Thyroid gland (tissue), 4 donors: ENCODE measurements at regions of chr13 and their contacts with region 1.

Region 1: DNA sequence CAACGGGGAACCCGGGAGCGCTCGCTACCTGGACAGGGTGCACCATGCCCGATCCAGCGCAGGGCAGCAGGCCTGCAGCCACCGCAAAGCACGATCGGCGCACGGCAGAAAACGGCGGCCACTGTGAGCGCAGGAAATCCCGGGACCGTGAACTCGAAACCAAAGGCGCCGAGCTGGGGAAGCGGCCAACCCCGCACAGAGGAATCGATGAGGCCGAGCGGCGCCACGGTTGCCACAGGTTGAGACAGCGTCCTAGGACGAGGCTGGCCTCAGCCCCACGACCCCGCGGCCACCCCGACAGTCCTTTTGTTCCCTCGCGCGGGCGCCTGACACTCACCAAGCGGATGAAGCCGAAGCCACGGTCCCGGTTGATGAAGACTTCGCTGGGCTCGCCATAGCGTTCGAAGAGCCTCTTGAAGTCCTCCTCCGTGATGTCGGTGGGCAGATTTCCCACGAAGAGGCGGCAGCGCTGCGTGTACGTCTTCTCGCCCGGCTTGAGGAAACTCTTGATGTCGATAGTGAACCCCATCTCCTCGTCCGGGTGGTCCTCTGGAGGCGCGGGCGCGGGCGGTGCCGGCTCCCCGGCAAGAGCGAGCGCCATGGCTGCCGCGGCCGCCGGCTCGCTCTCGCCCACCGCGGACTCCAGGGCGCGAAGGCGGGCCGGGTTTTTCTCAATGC is 557 bp downstream of the PSPC1 start:
- DNase-seq: peak; percentile 58
- H3K4me3 ChIP-seq: peak overlapping the region; percentile 53 to 100 (median 94)
- H3K27ac ChIP-seq: peak overlapping the region; percentile 88 to 95 (median 92)
- H3K4me1 ChIP-seq: peaks cover 7 to 8% of the 10 kb centered on the region in 2 donors
- H3K27me3 ChIP-seq: no peaks in the 10 kb centered on the region
- CTCF ChIP-seq: no peak
- POLR2A ChIP-seq: no peak

Region 2: DNA sequence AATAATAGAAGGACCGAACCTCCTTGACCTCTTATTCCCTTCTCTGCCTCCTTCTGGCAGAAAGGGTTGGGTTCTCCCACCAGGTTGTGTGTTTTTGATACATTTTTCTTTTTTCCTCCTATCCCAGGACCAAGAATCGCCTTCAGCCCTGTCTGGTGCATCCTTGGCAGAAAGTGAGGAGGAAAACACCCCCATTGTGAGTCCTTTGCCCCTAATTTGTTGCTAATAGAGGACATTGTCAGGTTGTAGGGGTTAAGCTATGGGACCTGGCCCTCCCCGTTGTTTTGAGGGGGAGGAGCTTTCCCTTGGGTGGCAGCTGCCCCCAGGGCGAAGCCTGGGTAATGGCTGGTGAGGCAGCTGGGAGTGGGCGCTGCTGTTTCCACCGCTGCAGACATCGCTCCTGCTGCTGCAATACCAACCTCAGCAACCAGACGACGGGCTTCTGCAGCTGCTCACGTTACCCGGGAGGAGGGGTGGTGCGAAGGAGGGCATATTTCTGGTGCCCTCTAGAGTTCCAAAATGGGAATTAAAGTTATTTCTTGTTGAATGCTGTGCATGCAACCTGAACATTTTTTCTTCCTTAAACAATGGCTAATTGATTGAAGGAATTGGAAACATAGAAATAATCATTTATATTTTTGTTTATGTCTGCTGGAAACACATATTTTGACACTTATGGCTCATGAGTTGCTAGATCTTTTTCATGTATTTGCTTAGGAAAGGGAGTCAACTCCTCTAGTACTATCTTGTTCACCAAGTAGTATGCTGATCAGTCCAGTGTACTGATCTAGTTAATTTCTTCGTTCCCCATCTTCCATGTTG is 177.9 kb after region 1 on chr13:
- intact Hi-C with region 1: loop called (anchors 5 kb)
- DNase-seq: peak; percentile 86 to 90
- H3K4me3 ChIP-seq: peak overlapping the region; percentile 11 to 96 (median 68)
- H3K27ac ChIP-seq: peak overlapping the region; percentile 96 to 100 (median 98)
- H3K4me1 ChIP-seq: peaks cover 18 to 25% of the 10 kb centered on the region in 2 donors
- H3K27me3 ChIP-seq: no peaks in the 10 kb centered on the region
- CTCF ChIP-seq: peak; percentile 75 to 98 (median 92)
- POLR2A ChIP-seq: peak in 1 of 2 donors; percentile 83